Lower leg skin (tissue), 4 donors: ENCODE measurements at regions of chr11 and their contacts with region 1.

Region 1: GRCh38 chr11:72642884-72643511 is 31.2 kb downstream of the PDE2A start:
- DNase-seq: peak; percentile 21 to 89
- H3K4me3 ChIP-seq: peak overlapping the region; percentile 17
- CTCF ChIP-seq: peak in 1 of 3 donors; percentile 86
- POLR2A ChIP-seq: no peak

Region 2: GRCh38 chr11:72471005-72471898 is 171.7 kb before region 1 on chr11:
- intact Hi-C with region 1: loop called (anchors 10 kb)
- DNase-seq: peak; percentile 66 to 85
- H3K4me3 ChIP-seq: no peak overlapping the region
- CTCF ChIP-seq: peak in 1 of 3 donors; percentile 64
- POLR2A ChIP-seq: no peak

Region 3: DNA sequence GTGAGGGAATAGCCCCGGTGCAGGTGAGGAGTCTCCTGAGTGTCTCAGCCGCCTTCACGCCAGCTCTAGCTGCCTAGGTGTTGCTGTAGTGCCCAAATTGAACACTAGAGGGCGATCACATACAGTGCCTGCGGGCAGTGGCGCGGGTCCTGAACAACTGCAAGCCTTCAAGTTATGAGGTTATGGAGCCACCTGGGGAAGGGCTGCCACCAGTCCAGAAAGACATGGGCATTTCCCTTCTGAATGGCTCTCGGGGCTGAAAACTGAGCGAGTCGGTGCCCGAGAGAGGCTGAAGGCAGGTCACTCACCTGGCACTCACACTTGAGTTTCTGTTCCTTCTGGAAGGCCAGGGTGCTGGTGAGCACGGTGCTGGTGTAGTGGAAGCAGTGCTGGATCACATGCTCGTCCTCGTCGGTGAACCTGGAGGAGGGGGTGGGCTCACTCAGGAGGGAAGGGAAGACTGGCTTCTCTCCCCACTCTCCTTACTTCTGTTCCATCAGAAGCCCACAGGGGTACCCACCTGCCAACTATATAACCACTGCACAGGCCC is 57.2 kb before region 1 on chr11:
- intact Hi-C with region 1: loop called (anchors 2 kb)
- DNase-seq: peak in 1 of 2 donors; percentile 56
- H3K4me3 ChIP-seq: no peak overlapping the region
- CTCF ChIP-seq: peak in 1 of 3 donors; percentile 58
- POLR2A ChIP-seq: no peak